Heart right ventricle (tissue), 16 donors: ENCODE measurements at regions of chr20 and their contacts with region 1.

Region 1: DNA sequence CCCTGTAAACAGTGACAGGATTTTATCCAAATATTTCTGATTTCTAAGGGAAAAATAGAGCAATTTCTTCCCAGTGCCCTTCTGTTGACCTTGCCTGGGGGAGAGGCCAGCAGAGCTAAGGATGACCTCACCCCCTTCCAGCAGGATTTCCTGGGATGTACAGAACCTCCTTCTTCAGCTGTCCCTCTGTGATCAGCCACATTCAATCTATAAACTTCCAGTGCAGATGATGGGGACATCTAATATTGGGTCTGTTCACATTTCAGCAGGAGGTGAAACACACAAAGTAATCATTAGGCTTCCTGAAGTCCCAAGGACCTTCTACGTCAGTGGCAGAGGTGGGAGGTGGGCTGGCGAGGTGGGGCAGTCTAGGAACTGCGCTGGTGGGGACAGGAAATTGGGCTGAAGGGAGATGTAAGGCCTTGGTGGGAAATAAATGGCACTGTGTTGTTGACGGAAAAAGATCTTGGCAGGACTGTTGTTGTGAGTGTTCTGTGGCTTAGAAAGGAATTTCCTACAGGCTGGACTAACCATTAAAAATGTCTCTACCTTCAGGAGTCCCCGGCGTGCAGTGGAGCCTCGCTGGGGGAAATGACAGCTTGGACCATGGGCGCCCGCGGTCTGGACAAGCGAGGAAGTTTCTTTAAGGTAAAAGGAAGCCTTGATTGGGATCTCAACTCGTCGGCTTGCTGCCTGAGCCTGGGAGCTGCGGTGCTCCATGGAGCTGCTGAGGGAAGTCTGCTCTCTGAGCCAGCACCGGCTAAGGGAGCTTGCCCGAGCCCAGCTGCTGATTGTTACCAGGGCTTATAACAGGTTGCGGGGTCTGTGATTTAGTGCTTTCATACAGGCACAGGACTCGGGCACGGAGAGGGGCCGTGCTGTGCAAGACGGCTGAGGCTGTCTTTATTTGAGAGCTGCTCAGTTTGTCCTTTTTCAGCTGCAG is 127.9 kb upstream of the NAA20 start:
- DNase-seq: peak; percentile 66 to 84
- ATAC-seq: peak; percentile 70 to 86 (median 80)
- H3K4me3 ChIP-seq: peak overlapping the region in 9 of 10 donors; percentile 30 to 58 (median 54)
- H3K27ac ChIP-seq: peak overlapping the region; percentile 72 to 98 (median 88)
- H3K4me1 ChIP-seq: peaks cover 29 to 97% (median 67%) of the 10 kb centered on the region in 9 donors
- H3K27me3 ChIP-seq: no peaks in the 10 kb centered on the region
- CTCF ChIP-seq: no peak

Region 2: DNA sequence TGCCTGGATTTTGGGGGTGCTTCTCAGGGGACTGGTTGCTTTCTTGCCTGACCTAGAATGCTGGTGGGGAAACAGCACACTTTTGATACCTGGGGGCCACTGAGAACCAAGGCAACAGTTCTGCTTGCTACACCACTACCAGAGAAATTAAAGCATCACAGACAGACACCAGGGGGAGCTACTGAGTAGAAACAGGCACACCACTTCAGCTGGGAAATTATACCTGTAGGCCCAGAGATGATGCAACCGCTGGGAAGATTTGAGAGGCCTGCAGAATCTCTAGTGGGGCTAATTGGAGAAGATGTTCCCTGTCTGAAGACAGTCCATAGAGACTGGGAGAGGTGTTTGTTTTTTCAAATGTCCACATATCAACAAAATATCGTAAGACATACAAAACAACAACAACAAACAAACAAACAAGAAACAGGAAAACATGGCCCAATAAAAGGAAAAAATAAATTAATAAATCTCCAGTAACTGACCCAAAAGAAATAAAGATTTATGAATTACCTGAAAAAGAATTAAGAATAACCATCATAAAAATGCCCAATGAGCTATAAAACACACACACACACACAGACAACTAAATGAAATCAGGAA is 260.6 kb before region 1 on chr20:
- intact Hi-C with region 1: no loop called
- DNase-seq: peak in 1 of 2 donors; percentile 50
- ATAC-seq: peak in 3 of 8 donors; percentile 29 to 54 (median 53)
- H3K4me3 ChIP-seq: no peak overlapping the region
- H3K27ac ChIP-seq: no peak overlapping the region
- H3K4me1 ChIP-seq: peaks cover 0 to 2% (median 0%) of the 10 kb centered on the region in 9 donors
- H3K27me3 ChIP-seq: peaks cover 0 to 9% (median 0%) of the 10 kb centered on the region in 7 donors
- CTCF ChIP-seq: peak; percentile 40 to 72 (median 66)

Region 3: DNA sequence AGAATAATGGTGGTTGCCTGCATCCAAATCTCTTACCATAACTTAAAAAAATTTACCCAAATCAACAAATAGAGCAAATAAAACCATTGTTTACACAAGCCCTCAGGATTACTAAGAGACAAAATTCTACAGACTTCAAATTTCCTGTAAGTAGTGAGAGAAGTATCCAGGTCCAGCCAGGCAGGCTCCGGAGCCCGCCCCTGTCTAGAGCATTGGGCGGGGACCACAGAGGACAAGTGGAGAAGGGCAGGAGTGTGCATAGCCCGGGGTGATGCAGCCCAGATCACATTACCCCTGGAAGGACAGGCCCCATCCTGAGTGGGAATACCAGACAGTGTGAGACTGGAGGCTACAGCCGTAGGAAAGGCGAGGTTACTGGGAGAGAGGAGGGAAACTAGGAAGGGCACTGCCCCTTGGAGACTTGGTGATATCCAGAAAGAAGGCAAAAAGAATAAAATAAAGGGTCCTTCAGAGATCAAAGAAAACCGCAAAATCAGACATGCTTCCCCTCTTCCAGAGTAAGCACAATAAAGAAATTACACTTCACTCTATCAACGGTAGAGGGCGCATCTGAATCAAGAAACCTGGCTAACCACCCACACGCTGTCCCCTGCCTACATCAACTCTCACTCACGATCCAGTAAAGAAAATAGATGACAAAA is 104.6 kb before region 1 on chr20:
- intact Hi-C with region 1: loop called in 7 of 10 experiments (anchors 1 to 10 kb)
- DNase-seq: peak; percentile 31 to 81
- ATAC-seq: peak; percentile 67 to 89 (median 82)
- H3K4me3 ChIP-seq: peak overlapping the region in 1 of 10 donors; percentile 1
- H3K27ac ChIP-seq: peak overlapping the region; percentile 32 to 91 (median 76)
- H3K4me1 ChIP-seq: peaks cover 28 to 67% (median 58%) of the 10 kb centered on the region in 9 donors
- H3K27me3 ChIP-seq: no peaks in the 10 kb centered on the region
- CTCF ChIP-seq: peak; percentile 59 to 87 (median 78)

Region 4: GRCh38 chr20:19815553-19815991 is 73.7 kb before region 1 on chr20:
- intact Hi-C with region 1: loop called in 4 of 10 experiments (anchors 2 to 5 kb)
- DNase-seq: peak in 1 of 2 donors; percentile 60
- ATAC-seq: peak; percentile 82 to 96 (median 92)
- H3K4me3 ChIP-seq: no peak overlapping the region
- H3K27ac ChIP-seq: peak overlapping the region; percentile 11 to 90 (median 60)
- H3K4me1 ChIP-seq: peaks cover 4 to 68% (median 55%) of the 10 kb centered on the region in 9 donors
- H3K27me3 ChIP-seq: no peaks in the 10 kb centered on the region
- CTCF ChIP-seq: peak in 4 of 9 donors; percentile 20 to 38 (median 26)

Region 5: GRCh38 chr20:19828232-19828631 is 61.0 kb before region 1 on chr20:
- intact Hi-C with region 1: loop called in 2 of 10 experiments (anchors 5 kb)
- DNase-seq: no peak
- ATAC-seq: peak in 7 of 8 donors; percentile 26 to 57 (median 38)
- H3K4me3 ChIP-seq: no peak overlapping the region
- H3K27ac ChIP-seq: peak overlapping the region in 3 of 10 donors; percentile 6 to 50 (median 41)
- H3K4me1 ChIP-seq: peaks cover 6 to 56% (median 38%) of the 10 kb centered on the region in 9 donors
- H3K27me3 ChIP-seq: no peaks in the 10 kb centered on the region
- CTCF ChIP-seq: peak in 7 of 9 donors; percentile 29 to 64 (median 43)

Region 6: DNA sequence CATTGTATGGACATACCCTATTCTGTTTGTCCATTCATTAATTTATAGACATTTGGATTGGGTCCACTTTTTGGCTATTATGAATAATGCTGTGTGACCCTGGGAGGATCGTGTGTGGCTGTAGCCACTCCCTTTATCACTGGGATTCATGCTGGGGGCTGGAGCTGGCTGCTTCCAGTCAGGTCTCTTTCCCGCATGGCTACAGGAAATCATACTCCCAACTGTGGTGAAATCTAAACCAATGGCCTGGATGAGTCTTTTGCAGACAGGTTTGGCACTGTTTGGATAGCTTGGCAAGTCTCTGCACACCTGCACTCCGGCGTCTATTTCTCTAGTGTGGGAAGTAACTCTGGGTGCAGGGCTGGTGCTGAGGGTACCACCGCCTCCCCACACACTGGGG is 50.8 kb before region 1 on chr20:
- intact Hi-C with region 1: no loop called
- DNase-seq: no peak
- ATAC-seq: no peak
- H3K4me3 ChIP-seq: no peak overlapping the region
- H3K27ac ChIP-seq: no peak overlapping the region
- H3K4me1 ChIP-seq: peaks cover 0 to 31% (median 16%) of the 10 kb centered on the region in 9 donors
- H3K27me3 ChIP-seq: no peaks in the 10 kb centered on the region
- CTCF ChIP-seq: no peak

Region 7: GRCh38 chr20:19915111-19915798 is 26.0 kb after region 1 on chr20:
- intact Hi-C with region 1: no loop called
- DNase-seq: no peak
- ATAC-seq: peak; percentile 6 to 56 (median 27)
- H3K4me3 ChIP-seq: no peak overlapping the region
- H3K27ac ChIP-seq: peak overlapping the region in 9 of 10 donors; percentile 1 to 85 (median 44)
- H3K4me1 ChIP-seq: peaks cover 12 to 93% (median 74%) of the 10 kb centered on the region in 9 donors
- H3K27me3 ChIP-seq: no peaks in the 10 kb centered on the region
- CTCF ChIP-seq: no peak

Region 8: GRCh38 chr20:19932170-19932667 is 42.9 kb after region 1 on chr20:
- intact Hi-C with region 1: no loop called
- DNase-seq: peak in 1 of 2 donors; percentile 71
- ATAC-seq: peak; percentile 55 to 69 (median 62)
- H3K4me3 ChIP-seq: no peak overlapping the region
- H3K27ac ChIP-seq: peak overlapping the region in 9 of 10 donors; percentile 60 to 89 (median 75)
- H3K4me1 ChIP-seq: peaks cover 3 to 100% (median 88%) of the 10 kb centered on the region in 9 donors
- H3K27me3 ChIP-seq: no peaks in the 10 kb centered on the region
- CTCF ChIP-seq: peak in 2 of 9 donors; percentile 5 to 11

Region 9: DNA sequence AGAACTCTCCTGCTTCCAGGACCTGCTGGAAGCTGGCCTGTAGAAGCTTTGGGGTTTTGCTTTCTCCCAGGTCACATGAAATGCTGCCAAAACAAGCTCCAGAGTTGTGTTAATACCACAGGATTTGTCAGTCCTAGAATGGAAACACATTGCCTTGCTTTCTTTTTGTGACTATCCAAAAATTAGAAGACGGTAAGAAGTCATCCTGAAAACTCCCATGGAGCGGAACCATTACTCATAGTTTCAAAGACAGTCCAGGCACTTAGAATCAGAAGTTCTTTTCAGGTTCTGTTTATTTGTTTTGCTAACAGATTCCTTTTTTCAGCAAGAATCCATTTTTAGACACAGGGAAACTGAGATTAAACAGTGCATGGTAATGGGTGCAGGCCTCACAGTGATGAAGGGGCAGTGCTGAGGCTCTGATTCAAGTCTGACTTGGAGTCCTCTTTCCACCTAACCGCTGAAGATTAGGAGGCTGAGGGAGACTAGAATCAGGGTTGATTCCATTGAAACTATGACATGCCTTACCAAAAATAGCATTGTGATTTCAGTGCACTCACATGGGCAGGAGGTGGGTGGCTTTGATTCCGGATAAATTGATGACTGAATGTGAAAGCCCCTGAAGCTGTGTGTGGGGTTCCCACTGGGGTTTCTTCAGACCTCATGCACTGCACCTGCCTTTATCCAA is 55.6 kb after region 1 on chr20:
- intact Hi-C with region 1: loop called in 1 of 10 experiments (anchors 5 kb)
- DNase-seq: no peak
- ATAC-seq: peak in 7 of 8 donors; percentile 53 to 77 (median 67)
- H3K4me3 ChIP-seq: no peak overlapping the region
- H3K27ac ChIP-seq: peak overlapping the region; percentile 20 to 89 (median 74)
- H3K4me1 ChIP-seq: peaks cover 20 to 91% (median 71%) of the 10 kb centered on the region in 9 donors
- H3K27me3 ChIP-seq: no peaks in the 10 kb centered on the region
- CTCF ChIP-seq: no peak